Motor neuron (in vitro differentiated cells): ENCODE measurements at regions of chr12 and their contacts with region 1.

Region 1: GRCh38 chr12:6554168-6555017 is 1.4 kb downstream of the IFFO1 start:
- ATAC-seq: peak; percentile 13 to 66 (median 64)
- H3K4me3 ChIP-seq: peak overlapping the region; percentile 60 to 87 (median 69)
- H3K27ac ChIP-seq: no peak overlapping the region
- H3K4me1 ChIP-seq: peaks cover 18 to 25% of the 10 kb centered on the region in 2 donors

Region 2: GRCh38 chr12:6662906-6663742 is 108.7 kb after region 1 on chr12 and contains the start of gene ING4:
- in situ Hi-C with region 1: loop called in 1 of 9 experiments (anchors 25 kb)
- ATAC-seq: peak; percentile 97 to 100 (median 99)
- H3K4me3 ChIP-seq: peak within 1 kb of the TSS; percentile 65 to 79 (median 75)
- H3K27ac ChIP-seq: peak within 1 kb of the TSS; percentile 91 to 93
- H3K4me1 ChIP-seq: peaks cover 8 to 9% of the 10 kb centered on the region in 2 donors
- total RNA-seq, gene ING4: 34.3 to 108 (median 81.6) TPM

Region 3: DNA sequence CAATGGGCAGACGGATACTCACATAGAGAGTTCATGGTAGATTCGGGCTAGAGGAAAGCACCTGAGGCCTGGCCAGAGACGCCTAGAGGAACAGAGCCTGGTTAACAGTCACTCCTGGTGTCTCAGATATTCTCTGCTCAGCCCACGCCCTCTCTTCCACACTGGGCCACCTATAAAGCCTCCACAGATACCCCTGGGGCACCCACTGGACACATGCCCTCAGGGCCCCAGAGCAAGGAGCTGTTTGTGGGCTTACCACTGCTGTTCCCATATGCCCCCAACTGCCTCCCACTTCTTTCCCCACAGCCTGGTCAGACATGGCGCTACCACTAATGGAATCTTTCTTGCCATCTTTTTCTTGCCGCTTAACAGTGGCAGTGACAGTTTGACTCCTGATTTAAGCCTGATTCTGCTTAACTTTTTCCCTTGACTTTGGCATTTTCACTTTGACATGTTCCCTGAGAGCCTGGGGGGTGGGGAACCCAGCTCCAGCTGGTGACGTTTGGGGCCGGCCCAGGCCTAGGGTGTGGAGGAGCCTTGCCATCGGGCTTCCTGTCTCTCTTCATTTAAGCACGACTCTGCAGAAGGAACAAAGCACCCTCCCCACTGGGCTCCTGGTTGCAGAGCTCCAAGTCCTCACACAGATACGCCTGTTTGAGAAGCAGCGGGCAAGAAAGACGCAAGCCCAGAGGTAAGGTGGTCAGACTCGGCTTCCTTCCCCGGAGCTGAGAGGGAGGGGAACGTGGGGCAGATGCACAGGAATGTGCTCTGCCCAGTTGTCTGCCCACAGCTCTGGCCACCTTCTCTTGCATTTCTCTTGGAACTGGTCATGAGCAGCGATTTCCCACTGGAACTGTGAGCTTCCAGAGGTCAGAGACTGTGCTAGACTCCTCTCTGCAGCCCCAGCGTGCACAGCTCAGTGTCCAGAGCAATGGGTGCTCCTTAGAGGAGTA is 234.9 kb after region 1 on chr12 and contains the start of gene CD4:
- in situ Hi-C with region 1: no loop called
- ATAC-seq: peak in 2 of 8 experiments; percentile 70 to 89
- H3K4me3 ChIP-seq: no peak within 1 kb of the TSS
- H3K27ac ChIP-seq: no peak within 1 kb of the TSS
- H3K4me1 ChIP-seq: peaks cover 21 to 22% of the 10 kb centered on the region in 2 donors
- total RNA-seq, gene CD4: 0.49 to 2.8 (median 1.1) TPM

Region 4: GRCh38 chr12:6937481-6938297 is 383.3 kb after region 1 on chr12:
- in situ Hi-C with region 1: no loop called
- ATAC-seq: peak; percentile 92 to 97 (median 94)
- H3K4me3 ChIP-seq: peak overlapping the region; percentile 39 to 65 (median 60)
- H3K27ac ChIP-seq: peak overlapping the region; percentile 92 to 97
- H3K4me1 ChIP-seq: peaks cover 11 to 13% of the 10 kb centered on the region in 2 donors